ENCODE measurements at regions of chr4 and their contacts with region 1.

Region 1: DNA sequence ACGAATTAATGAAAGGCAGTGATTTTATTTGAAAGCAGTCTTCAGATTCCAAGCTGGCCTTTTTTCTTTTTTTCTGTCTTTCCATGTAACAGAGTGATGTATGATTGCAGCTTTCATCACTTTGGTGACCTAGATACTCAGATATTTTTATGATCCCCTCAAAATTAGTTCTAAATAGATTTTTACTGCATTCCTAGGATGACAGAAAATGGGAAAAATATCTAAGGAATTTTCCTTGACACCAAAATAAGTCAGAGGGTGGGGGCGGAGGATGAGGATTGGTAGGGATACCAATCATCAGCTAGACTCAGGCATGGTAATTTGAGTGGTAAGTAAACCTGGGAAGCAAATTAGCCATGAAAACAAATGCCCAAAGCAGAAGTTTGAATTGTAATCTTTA is 11.9 kb upstream of the HMGB2 start:
- DNase-seq: no peak
- ATAC-seq: no peak
- H3K4me3 ChIP-seq: no peak overlapping the region
- H3K27ac ChIP-seq: no peak overlapping the region
- H3K4me1 ChIP-seq: no peaks in the 10 kb centered on the region
- H3K27me3 ChIP-seq: no peaks in the 10 kb centered on the region
- CTCF ChIP-seq: no peak
- EP300 ChIP-seq: no peak
- POLR2A ChIP-seq: no peak
- RAD21 ChIP-seq: no peak

Region 2: DNA sequence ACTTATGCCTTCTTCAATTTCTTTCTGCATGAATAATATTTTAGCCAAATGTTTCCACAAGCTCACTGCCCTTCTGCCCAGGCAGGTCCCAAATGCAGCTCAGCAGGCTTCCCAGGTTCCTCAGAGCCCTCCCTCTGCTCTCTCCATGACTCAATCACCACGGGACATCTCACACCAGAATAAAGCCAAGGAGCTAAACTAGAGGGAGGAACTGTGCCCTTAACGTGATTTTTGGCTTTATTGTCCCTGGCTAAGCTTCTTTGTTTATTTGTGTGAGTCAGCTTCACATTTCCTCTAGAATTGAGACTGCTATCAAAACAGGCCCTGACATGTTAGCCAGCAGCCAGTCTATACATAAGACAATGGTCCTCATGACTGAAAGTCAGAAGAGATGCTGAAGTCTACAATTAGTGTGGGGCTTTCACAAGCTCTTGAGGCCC is 363.9 kb before region 1 on chr4:
- CTCF ChIA-PET with region 1: no interaction called
- POLR2A ChIA-PET with region 1: no interaction called
- RAD21 ChIA-PET with region 1: no interaction called
- SMC1A ChIA-PET with region 1: no interaction called
- in situ Hi-C with region 1: no loop called
- intact Hi-C with region 1: no loop called
- DNase-seq: peak; percentile 33
- ATAC-seq: peak; percentile 68
- H3K4me3 ChIP-seq: no peak overlapping the region
- H3K27ac ChIP-seq: no peak overlapping the region
- H3K4me1 ChIP-seq: no peaks in the 10 kb centered on the region
- H3K27me3 ChIP-seq: no peaks in the 10 kb centered on the region
- CTCF ChIP-seq: no peak
- EP300 ChIP-seq: 0 out of 4 replicates have a peak, but pooled peaks of 1 of the 2 experiments have one; percentile 11
- POLR2A ChIP-seq: no peak
- RAD21 ChIP-seq: no peak

Region 3: GRCh38 chr4:173360587-173361221 is 14.6 kb after region 1 on chr4:
- CTCF ChIA-PET with region 1: interaction called, 5 read pairs
- POLR2A ChIA-PET with region 1: interaction called, 472 read pairs
- RAD21 ChIA-PET with region 1: interaction called, 3 read pairs
- SMC1A ChIA-PET with region 1: interaction called, 12 read pairs
- in situ Hi-C with region 1: no loop called
- intact Hi-C with region 1: no loop called
- DNase-seq: no peak
- ATAC-seq: peak; percentile 63
- H3K4me3 ChIP-seq: no peak overlapping the region
- H3K27ac ChIP-seq: no peak overlapping the region
- H3K4me1 ChIP-seq: no peaks in the 10 kb centered on the region
- H3K27me3 ChIP-seq: no peaks in the 10 kb centered on the region
- CTCF ChIP-seq: peak in 2 of 3 experiments; percentile 15 to 24; a peak in 1 of 6 replicates
- EP300 ChIP-seq: no peak
- POLR2A ChIP-seq: no peak
- RAD21 ChIP-seq: 0 out of 2 replicates have a peak, but pooled peaks have one; percentile 8